PC-3 (cell line): ENCODE measurements at regions of chr11 and their contacts with region 1.

Region 1: GRCh38 chr11:58675334-58676155 is 53.1 kb downstream of the CNTF start:
- DNase-seq: peak; percentile 85
- ATAC-seq: peak; percentile 98
- H3K4me3 ChIP-seq: no peak overlapping the region
- H3K27ac ChIP-seq: no peak overlapping the region
- H3K4me1 ChIP-seq: no peaks in the 10 kb centered on the region
- H3K27me3 ChIP-seq: peaks cover 9% of the 10 kb centered on the region; the same call in 1 of the 2 replicates
- CTCF ChIP-seq: peak; percentile 99

Region 2: GRCh38 chr11:58592760-58593472 is 82.6 kb before region 1 on chr11:
- CTCF ChIA-PET with region 1: no interaction called
- POLR2A ChIA-PET with region 1: no interaction called
- intact Hi-C with region 1: no loop called
- DNase-seq: peak; percentile 24
- ATAC-seq: no peak; the same call in 1 of the 2 replicates
- H3K4me3 ChIP-seq: no peak overlapping the region
- H3K27ac ChIP-seq: no peak overlapping the region
- H3K4me1 ChIP-seq: no peaks in the 10 kb centered on the region
- H3K27me3 ChIP-seq: no peaks in the 10 kb centered on the region
- CTCF ChIP-seq: no peak

Region 3: DNA sequence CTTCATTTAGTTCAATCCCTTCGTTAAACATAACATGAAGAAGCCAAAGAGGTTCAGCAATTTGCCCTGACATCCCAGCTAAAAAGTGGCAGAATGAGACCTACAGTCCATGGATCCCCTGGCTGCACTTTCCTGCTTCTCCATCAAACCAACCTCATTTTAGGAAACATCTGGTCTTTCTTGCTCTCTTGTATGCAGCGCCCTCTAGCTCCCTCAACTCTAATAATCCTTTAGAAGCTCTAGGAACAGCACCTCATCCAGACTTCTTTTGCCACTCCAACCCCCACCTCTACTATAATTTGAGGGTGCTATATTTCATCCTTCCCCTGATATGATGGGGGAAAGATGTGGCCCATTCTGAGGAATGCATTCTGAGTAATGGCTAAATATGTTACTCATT is 45.7 kb before region 1 on chr11:
- CTCF ChIA-PET with region 1: no interaction called
- POLR2A ChIA-PET with region 1: no interaction called
- intact Hi-C with region 1: no loop called
- DNase-seq: peak; percentile 67
- ATAC-seq: peak; percentile 37
- H3K4me3 ChIP-seq: no peak overlapping the region
- H3K27ac ChIP-seq: no peak overlapping the region
- H3K4me1 ChIP-seq: peaks cover 35% of the 10 kb centered on the region
- H3K27me3 ChIP-seq: no peaks in the 10 kb centered on the region
- CTCF ChIP-seq: peak; percentile 91

Region 4: DNA sequence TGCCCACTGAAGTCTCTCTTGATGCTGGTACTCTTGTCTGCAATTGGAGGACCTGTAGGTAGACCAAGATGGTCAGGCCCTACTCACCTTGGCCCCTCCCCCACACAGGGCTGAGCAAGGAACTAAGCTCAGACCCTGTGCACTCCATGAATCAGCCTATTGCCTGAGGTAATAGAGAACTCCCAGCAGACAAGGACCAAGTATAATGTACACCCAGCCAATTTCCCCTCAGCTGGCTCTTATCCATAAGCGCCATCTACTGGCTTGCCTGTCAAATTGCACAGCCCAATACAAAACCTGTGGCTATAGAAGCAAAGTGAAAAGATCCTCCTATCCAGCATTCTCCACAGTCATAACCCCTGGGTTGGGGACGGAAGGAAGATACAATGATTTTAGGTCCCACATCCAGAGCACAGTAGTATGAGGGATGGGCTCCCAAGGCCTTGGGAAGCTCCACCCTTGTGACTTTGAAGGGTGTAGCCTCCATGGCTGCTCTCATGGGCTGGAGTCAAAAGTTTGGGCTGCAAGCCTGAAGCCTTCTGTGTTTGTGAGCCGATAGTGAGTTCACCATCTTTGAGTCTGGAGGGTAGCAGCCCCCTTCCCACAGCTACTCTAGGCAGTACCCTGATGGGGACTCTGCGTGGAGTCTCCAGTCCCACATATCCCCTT is 112.9 kb after region 1 on chr11:
- CTCF ChIA-PET with region 1: no interaction called
- POLR2A ChIA-PET with region 1: no interaction called
- intact Hi-C with region 1: loop called (anchors 5 kb)
- DNase-seq: peak; percentile 91
- ATAC-seq: peak; percentile 91
- H3K4me3 ChIP-seq: no peak overlapping the region
- H3K27ac ChIP-seq: peak overlapping the region; percentile 69
- H3K4me1 ChIP-seq: peaks cover 7% of the 10 kb centered on the region
- H3K27me3 ChIP-seq: no peaks in the 10 kb centered on the region
- CTCF ChIP-seq: peak; percentile 98